T-cell (primary cell): ENCODE measurements at regions of chr3 and their contacts with region 1.

Region 1: GRCh38 chr3:197186887-197187588 is 111.4 kb downstream of the DLG1 start:
- DNase-seq: peak in 10 of 35 experiments; percentile 4 to 74 (median 14)
- ATAC-seq: peak in 3 of 4 experiments; percentile 77 to 80 (median 79)
- H3K4me3 ChIP-seq: no peak overlapping the region
- H3K4me3 Mint-ChIP-seq: no peak overlapping the region
- H3K27ac ChIP-seq: no peak overlapping the region
- H3K27ac Mint-ChIP-seq: no peak overlapping the region
- H3K4me1 ChIP-seq: no peaks in the 10 kb centered on the region
- H3K4me1 Mint-ChIP-seq: peaks cover 6 to 10% (median 8%) of the 10 kb centered on the region in 3 donors
- H3K27me3 ChIP-seq: no peaks in the 10 kb centered on the region
- H3K27me3 Mint-ChIP-seq: no peaks in the 10 kb centered on the region

Region 2: GRCh38 chr3:196388956-196389355 is 798.1 kb before region 1 on chr3:
- CTCF ChIA-PET with region 1: no interaction called
- POLR2A ChIA-PET with region 1: interaction called in 1 of 2 experiments, 10 read pairs
- DNase-seq: no peak
- ATAC-seq: no peak
- H3K4me3 ChIP-seq: no peak overlapping the region
- H3K4me3 Mint-ChIP-seq: no peak overlapping the region
- H3K27ac ChIP-seq: no peak overlapping the region
- H3K27ac Mint-ChIP-seq: no peak overlapping the region
- H3K4me1 ChIP-seq: no peaks in the 10 kb centered on the region
- H3K4me1 Mint-ChIP-seq: peaks cover 7 to 14% (median 13%) of the 10 kb centered on the region in 3 donors
- H3K27me3 ChIP-seq: no peaks in the 10 kb centered on the region
- H3K27me3 Mint-ChIP-seq: no peaks in the 10 kb centered on the region

Region 3: DNA sequence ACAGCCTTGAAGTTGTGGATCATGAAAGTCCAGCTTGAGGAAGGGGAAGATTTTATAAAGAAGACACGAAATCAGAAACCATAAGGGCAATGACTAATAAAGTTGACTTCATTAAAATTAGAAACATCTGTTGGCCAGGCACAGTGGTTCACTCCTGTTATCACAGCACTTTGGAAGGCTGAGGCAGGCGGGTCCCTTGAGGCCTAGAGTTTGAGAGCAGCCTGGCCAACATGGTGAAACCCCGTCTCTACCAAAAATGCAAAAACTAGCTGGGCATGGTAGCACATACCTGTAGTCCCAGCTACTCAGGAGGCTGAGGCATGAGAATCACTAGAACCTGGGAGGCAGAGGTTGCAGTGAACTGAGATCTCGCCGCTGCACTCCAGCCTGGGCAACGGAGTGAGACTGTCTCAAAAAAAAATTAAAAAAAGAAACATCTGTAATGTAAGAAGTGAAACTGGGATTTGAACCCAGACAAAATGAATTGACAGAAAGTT is 746.9 kb before region 1 on chr3:
- CTCF ChIA-PET with region 1: interaction called in 1 of 2 experiments, 11 read pairs
- POLR2A ChIA-PET with region 1: no interaction called
- DNase-seq: no peak
- ATAC-seq: no peak
- H3K4me3 ChIP-seq: no peak overlapping the region
- H3K4me3 Mint-ChIP-seq: no peak overlapping the region
- H3K27ac ChIP-seq: no peak overlapping the region
- H3K27ac Mint-ChIP-seq: no peak overlapping the region
- H3K4me1 ChIP-seq: no peaks in the 10 kb centered on the region
- H3K4me1 Mint-ChIP-seq: no peaks in the 10 kb centered on the region
- H3K27me3 ChIP-seq: no peaks in the 10 kb centered on the region
- H3K27me3 Mint-ChIP-seq: no peaks in the 10 kb centered on the region

Region 4: DNA sequence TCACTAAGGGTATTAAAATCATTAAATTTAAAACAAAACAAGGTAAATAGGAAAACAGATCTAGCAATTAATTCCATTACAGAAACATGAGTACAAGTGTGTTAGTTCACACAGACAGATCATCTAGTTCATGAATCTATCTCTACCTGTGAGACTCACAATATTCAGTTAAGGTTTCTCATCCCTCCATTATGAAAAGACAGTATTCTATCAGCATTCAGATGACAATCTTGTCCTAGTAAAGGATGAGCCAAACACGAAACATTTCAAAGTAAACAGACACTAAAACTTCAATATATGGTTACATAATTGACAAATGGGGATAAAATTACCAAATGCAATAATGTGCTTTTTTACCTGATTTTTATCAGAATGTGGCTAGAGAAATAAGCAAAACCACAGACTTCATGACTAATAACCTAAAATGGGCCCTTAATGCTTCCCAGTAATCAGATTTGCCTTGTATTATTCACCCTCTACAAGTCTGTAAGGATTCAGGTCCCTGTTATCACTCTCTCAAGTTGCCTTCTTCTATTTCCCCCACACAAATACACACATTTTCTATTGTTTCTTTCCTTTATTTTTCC is 15.5 kb before region 1 on chr3:
- CTCF ChIA-PET with region 1: no interaction called
- POLR2A ChIA-PET with region 1: no interaction called
- DNase-seq: no peak
- ATAC-seq: no peak
- H3K4me3 ChIP-seq: no peak overlapping the region
- H3K4me3 Mint-ChIP-seq: no peak overlapping the region
- H3K27ac ChIP-seq: no peak overlapping the region
- H3K27ac Mint-ChIP-seq: no peak overlapping the region
- H3K4me1 ChIP-seq: no peaks in the 10 kb centered on the region
- H3K4me1 Mint-ChIP-seq: peaks cover 22 to 39% (median 31%) of the 10 kb centered on the region in 3 donors
- H3K27me3 ChIP-seq: no peaks in the 10 kb centered on the region
- H3K27me3 Mint-ChIP-seq: no peaks in the 10 kb centered on the region

Region 5: DNA sequence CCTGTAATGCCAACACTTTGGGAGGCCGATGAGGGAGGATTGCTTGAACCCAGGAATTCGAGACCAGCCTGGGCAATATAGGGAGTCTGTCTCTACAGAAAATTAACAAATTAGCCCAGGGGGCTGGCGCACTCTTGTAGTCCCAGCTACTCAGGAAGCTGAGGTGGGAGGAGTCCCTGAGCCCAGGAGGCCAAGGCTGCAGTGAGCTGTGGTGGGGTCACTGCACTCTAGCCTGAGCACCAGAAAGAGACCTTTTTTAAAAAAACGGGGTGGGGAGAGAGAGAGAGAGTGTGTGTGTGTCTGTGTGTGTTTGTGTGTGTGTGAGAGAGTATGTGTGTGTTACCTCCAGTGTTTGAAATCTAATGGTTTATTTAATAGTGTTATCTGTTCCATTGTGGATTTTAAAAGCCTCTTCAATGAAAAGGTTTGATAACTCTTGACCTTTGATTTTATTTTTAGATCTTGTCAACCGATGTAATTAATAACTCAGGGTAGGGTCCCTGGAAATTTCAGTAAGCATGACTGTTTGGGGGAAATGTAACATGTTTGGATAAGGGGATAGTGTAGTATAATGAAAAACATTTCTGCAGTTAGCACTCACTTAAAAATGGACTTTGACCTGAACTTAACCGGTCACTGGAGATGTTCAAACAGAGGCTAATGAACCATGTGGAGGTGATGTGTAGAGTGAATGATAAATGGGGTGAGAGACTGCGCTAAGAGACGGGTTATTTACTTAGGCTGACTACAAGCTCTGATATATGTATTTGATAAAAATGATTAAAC is 633.7 kb after region 1 on chr3:
- CTCF ChIA-PET with region 1: no interaction called
- POLR2A ChIA-PET with region 1: no interaction called
- DNase-seq: no peak
- ATAC-seq: no peak
- H3K4me3 ChIP-seq: no peak overlapping the region
- H3K4me3 Mint-ChIP-seq: no peak overlapping the region
- H3K27ac ChIP-seq: no peak overlapping the region
- H3K27ac Mint-ChIP-seq: peak overlapping the region in 1 of 2 donors; percentile 19
- H3K4me1 ChIP-seq: no peaks in the 10 kb centered on the region
- H3K4me1 Mint-ChIP-seq: peaks cover 2 to 5% (median 5%) of the 10 kb centered on the region in 3 donors
- H3K27me3 ChIP-seq: no peaks in the 10 kb centered on the region
- H3K27me3 Mint-ChIP-seq: no peaks in the 10 kb centered on the region